ENCODE measurements at regions of chr4 and their contacts with region 1.

Region 1: DNA sequence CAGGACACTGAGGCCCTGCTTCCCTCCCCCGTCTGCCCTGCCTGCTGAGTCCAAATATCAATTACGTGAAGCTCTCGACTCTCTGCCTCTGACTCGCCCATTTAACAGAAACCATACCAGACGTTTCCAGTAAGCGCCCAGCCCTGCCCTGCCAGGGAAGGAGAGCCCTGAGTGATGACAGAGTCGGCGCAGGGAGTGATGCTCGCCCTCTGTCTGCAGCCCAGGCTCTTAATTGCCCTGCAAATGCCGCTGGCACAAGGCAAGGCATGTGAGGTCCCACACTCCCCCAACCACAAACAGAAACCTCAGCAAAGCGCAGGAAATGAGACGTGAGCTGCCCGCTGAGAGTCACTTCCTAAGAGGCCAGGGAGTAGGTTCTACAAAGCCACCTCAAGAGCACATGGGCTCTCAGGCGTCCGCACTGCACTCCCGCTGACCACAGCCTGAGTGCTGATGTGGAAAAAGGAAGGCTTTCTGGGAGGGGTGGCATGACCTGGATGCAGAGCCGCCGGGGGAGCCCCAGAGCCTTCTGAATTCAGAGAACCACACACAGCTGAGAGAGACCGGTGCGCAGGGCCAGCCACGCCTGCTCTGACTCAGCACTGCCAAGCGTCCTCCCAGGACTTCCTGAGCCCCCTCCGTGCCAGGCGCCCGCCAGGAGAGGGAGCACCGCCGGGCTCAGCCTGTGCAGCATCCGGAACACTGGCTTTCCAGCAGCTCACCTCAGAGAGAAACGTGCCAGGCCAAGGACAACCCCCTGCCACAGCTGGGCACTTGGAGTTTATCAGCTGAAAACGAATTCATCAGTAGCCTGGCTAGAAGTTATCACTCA is 5.3 kb downstream of the ZFYVE28 start:
- DNase-seq: peak; percentile 64
- CTCF ChIP-seq: peak; percentile 25

Region 2: GRCh38 chr4:2393353-2394270 is 19.5 kb before region 1 on chr4:
- CTCF ChIA-PET with region 1: interaction called, 23 read pairs
- POLR2A ChIA-PET with region 1: no interaction called
- DNase-seq: peak; percentile 60
- CTCF ChIP-seq: no peak

Region 3: GRCh38 chr4:2402029-2402428 is 11.1 kb before region 1 on chr4:
- CTCF ChIA-PET with region 1: interaction called, 34 read pairs
- POLR2A ChIA-PET with region 1: interaction called, 4 read pairs
- DNase-seq: no peak
- CTCF ChIP-seq: no peak

Region 4: DNA sequence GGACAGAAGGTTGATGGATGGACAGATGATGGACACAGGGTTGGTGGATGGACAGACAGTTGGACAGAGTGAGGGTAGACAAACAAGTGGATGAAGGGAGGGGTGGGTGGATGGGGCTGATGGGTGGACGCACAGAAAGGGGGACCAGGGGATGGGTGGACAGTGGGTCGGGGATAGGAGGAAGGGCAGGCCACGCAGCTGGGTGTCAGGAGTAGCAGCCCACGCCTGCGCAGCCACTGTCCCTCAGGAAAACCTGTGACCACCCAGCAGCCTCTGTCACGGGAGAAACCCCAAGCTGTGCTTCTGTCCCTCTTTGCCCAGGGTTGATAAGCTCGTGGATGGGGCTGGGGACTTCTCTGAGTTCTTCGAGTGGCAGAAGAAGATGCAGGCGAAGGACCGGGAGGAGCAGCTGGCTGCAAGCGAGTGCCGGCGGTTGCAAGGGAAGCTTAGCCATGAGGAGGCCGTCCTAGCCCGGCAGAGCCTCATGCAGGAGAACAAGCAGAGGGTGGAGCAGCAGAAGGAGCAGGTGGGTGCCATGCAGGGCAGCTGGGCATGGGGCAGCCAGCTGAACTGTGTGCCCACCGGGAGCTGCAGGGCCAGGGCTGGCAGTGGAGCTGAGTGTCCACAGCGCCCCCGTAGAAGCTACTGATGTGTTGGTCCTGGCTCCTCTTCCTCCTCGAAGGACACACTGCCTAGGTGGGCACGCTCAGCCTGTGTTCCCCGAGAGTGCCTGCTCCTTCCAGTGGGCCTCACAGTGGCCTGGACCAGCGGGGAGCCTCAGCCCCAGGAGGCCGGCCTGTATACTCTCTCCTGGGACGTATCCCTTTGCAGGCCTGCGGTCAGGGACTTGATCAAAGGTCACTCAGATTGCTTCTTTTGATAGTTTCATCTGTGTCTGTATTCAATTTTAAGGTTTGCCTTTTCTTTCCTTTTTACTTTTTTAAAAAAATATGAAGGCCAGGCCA is 39.0 kb after region 1 on chr4:
- CTCF ChIA-PET with region 1: no interaction called
- POLR2A ChIA-PET with region 1: no interaction called
- DNase-seq: no peak
- CTCF ChIP-seq: no peak

Measured in GM10248 (cell line).